Dorsolateral prefrontal cortex (tissue), 120 donors: ENCODE measurements at regions of chr6 and their contacts with region 1.

Region 1: GRCh38 chr6:142387997-142388815 is 86.4 kb downstream of the ADGRG6 start:
- DNase-seq: no peak
- H3K4me3 ChIP-seq: no peak overlapping the region
- H3K27ac ChIP-seq: no peak overlapping the region
- H3K27me3 ChIP-seq: no peaks in the 10 kb centered on the region
- CTCF ChIP-seq: peak; percentile 39 to 84 (median 73)

Region 2: DNA sequence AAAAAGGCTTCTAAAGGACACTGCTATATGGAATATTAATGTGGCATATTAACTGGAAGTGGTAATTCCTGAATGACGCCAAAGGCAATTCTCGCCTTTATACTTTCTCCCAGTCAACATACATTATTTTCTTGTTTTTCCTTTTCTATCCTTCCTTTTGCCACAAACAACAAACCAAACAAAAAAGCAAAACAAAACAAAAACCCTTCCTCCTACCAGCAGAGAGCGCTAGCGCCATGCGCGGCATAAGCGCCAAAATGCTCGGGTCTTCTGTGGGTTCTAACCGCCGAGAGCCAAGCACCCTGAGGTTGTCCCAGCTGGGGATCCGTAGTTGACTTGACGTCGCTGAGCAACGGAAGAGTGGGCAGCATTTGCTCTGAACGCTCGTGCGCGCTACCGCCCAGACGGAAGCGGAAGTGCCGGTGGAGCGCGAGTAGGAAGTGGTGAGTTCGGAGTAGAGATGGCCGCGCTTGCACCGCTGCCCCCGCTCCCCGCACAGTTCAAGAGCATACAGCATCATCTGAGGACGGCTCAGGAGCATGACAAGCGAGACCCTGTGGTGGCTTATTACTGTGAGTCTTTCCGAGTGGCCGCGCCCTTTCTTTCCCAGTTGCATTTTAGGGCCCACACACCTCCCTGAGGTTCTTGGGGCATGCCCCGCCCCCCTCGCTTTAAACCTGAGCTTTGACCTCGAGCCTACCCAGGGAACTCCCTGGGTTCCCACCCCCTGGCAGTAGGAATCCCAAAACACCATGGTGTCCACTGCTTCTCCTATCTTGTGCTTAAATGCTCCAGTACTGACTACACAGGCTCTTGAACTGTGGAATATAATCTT is 241.2 kb before region 1 on chr6 and contains the starts of genes NMBR and VTA1:
- intact Hi-C with region 1: loop called (anchors 5 kb)
- DNase-seq: peak; percentile 95 to 98 (median 98)
- H3K4me3 ChIP-seq: peak within 1 kb of the TSS; percentile 63 to 99 (median 91)
- H3K27ac ChIP-seq: peak within 1 kb of the TSS in 56 of 59 donors; percentile 7 to 89 (median 72)
- H3K27me3 ChIP-seq: no peaks in the 10 kb centered on the region
- CTCF ChIP-seq: peak; percentile 93 to 100 (median 98)
- total RNA-seq, gene NMBR: 0.34 to 2.5 (median 0.73) TPM in 85 of 120 experiments, not detected in the others
- total RNA-seq, gene VTA1: 22.1 to 59.4 (median 43.8) TPM

Region 3: DNA sequence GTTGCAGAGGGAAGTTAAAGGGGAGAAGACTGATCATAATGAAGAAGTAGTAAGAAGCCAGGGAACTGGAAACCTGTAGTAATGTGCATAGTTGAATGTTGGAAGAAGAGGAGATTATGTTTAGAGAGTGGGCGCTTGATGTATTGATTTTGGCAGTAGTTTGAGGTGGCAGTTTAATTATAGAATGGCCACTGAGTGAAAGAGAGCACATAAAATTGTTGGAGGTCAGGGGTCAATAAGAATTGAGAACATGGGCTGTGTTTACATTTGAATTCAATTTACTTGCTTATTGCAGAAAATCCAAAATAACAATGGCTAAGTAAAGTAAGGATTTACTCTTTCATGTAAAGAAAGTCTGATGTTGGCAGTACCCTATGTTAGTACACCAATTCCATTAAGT is 225.4 kb before region 1 on chr6:
- intact Hi-C with region 1: loop called in 1 of 2 experiments (anchors 5 kb)
- DNase-seq: no peak
- H3K4me3 ChIP-seq: no peak overlapping the region
- H3K27ac ChIP-seq: no peak overlapping the region
- H3K27me3 ChIP-seq: no peaks in the 10 kb centered on the region
- CTCF ChIP-seq: no peak